Activated CD4-positive, alpha-beta memory T cell treated with anti-CD3 and anti-CD28 coated beads for 36 hours (primary cell): ENCODE measurements at regions of chr5 and their contacts with region 1.

Region 1: GRCh38 chr5:62328772-62329491 is 22.9 kb downstream of the KIF2A start:
- DNase-seq: no peak
- H3K4me3 Mint-ChIP-seq: no peak overlapping the region
- H3K27ac Mint-ChIP-seq: peak overlapping the region; percentile 70
- H3K4me1 Mint-ChIP-seq: peaks cover 83% of the 10 kb centered on the region
- H3K27me3 Mint-ChIP-seq: no peaks in the 10 kb centered on the region

Region 2: GRCh38 chr5:62315376-62316175 is 13.4 kb before region 1 on chr5:
- CTCF ChIA-PET with region 1: interaction called, 3 read pairs
- POLR2A ChIA-PET with region 1: interaction called, 6 read pairs
- intact Hi-C with region 1: loop called (anchors 2 kb)
- DNase-seq: no peak
- H3K4me3 Mint-ChIP-seq: no peak overlapping the region
- H3K27ac Mint-ChIP-seq: peak overlapping the region; percentile 38
- H3K4me1 Mint-ChIP-seq: peaks cover 81% of the 10 kb centered on the region
- H3K27me3 Mint-ChIP-seq: no peaks in the 10 kb centered on the region

Region 3: GRCh38 chr5:62340392-62340791 is 11.5 kb after region 1 on chr5:
- CTCF ChIA-PET with region 1: interaction called, 3 read pairs
- POLR2A ChIA-PET with region 1: no interaction called
- intact Hi-C with region 1: loop called (anchors 2 kb)
- DNase-seq: no peak
- H3K4me3 Mint-ChIP-seq: no peak overlapping the region
- H3K27ac Mint-ChIP-seq: no peak overlapping the region
- H3K4me1 Mint-ChIP-seq: peaks cover 66% of the 10 kb centered on the region
- H3K27me3 Mint-ChIP-seq: no peaks in the 10 kb centered on the region

Region 4: GRCh38 chr5:62473209-62473608 is 144.3 kb after region 1 on chr5:
- CTCF ChIA-PET with region 1: no interaction called
- POLR2A ChIA-PET with region 1: no interaction called
- intact Hi-C with region 1: no loop called
- DNase-seq: no peak
- H3K4me3 Mint-ChIP-seq: no peak overlapping the region
- H3K27ac Mint-ChIP-seq: no peak overlapping the region
- H3K4me1 Mint-ChIP-seq: no peaks in the 10 kb centered on the region
- H3K27me3 Mint-ChIP-seq: no peaks in the 10 kb centered on the region